Mammary epithelial cell (primary cell): ENCODE measurements at regions of chr17 and their contacts with region 1.

Region 1: DNA sequence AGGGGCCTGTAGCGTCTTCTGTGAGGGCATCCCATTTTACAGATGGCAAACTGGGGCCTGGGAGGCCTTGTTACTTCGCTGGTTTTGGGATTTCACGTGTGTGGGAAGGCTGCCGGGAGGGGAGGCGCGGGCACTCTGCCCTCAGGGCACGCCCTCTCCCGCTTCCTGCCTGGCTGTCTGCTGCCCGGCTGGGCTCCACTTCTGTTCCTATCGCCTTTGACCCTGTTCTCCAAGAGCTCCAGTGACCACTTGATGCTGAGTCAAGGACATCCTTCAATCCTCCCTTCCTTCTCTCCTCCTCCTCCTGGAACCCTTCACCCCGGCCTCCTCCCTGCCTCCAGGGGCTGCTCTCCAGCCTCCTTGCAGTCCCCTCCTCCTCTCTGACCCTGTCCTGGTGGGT is 16.0 kb downstream of the SPNS3 start:
- DNase-seq: no peak
- H3K4me3 ChIP-seq: no peak overlapping the region
- H3K27ac ChIP-seq: no peak overlapping the region
- H3K4me1 ChIP-seq: no peaks in the 10 kb centered on the region
- H3K27me3 ChIP-seq: no peaks in the 10 kb centered on the region
- CTCF ChIP-seq: no peak

Region 2: DNA sequence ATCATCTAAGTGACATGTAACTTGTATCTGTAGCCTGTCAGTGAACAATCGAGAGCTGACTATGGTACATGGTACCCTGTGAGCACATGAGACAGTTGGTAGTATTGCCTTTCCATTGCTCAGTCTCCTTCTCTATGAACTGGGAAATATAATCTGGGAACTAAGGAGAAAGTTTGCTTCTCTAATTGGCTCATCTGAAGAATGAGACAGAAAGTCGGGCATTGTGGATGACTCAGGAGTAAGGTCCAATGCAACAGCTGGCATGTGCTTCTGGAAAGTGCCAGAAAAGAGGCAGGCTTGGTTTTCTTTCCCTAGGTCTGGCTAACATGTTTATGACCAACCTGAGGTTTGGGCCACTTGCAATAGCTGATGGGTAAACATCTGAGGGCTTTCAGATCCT is 358.8 kb before region 1 on chr17:
- CTCF ChIA-PET with region 1: no interaction called
- dilution Hi-C with region 1: loop called (anchors 5 kb)
- in situ Hi-C with region 1: no loop called
- intact Hi-C with region 1: no loop called
- DNase-seq: no peak
- H3K4me3 ChIP-seq: no peak overlapping the region
- H3K27ac ChIP-seq: no peak overlapping the region
- H3K4me1 ChIP-seq: no peaks in the 10 kb centered on the region
- H3K27me3 ChIP-seq: no peaks in the 10 kb centered on the region
- CTCF ChIP-seq: no peak

Region 3: DNA sequence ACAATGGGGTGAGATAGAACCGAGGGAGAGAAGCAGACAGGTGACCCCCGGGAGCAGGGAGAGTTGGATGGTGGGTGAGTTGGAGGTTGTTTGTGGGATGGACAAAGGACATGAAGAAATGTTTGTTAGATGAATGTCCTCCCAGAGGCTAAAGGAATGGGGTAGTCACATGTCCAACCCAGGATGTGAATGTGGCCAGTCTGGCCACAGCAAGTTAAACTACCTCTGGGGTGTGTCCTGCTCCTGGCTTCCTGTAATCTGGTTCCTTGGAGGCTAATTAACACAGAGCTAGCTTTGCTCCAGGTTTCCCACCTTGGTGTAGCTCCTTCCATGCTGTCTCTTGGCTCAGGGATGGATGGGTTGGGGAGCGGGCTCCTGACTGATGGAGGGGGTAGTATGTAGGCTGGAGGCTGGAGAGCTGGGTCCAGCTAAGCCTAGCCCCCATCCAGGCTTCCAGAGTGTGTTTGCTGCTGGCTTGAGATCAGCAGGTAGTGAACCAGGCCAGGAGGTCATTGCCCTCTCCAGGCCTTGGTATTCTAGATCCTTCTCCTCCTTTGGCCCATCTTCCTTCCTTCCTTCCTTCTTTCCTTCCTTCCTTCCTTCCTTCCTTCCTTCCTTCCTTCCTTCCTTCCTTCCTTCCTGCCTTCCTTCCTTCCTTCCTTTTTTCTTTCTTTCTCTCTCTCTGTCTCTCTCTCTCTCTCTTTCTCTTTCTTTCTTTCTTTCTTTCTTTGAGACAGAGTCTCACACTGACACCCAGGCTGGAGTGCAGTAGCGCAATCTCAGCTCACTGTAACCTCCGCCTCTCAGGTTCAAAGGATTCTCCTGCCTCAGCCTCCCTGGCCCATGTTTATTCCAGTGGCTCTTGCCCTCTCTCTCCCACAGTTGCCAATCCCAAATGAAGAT is 55.3 kb before region 1 on chr17:
- CTCF ChIA-PET with region 1: no interaction called
- dilution Hi-C with region 1: no loop called
- in situ Hi-C with region 1: no loop called
- intact Hi-C with region 1: no loop called
- DNase-seq: peak; percentile 90
- H3K4me3 ChIP-seq: peak overlapping the region; percentile 7 to 32 (median 20)
- H3K27ac ChIP-seq: peak overlapping the region; percentile 80
- H3K4me1 ChIP-seq: peaks cover 32% of the 10 kb centered on the region
- H3K27me3 ChIP-seq: no peaks in the 10 kb centered on the region
- CTCF ChIP-seq: no peak

Region 4: DNA sequence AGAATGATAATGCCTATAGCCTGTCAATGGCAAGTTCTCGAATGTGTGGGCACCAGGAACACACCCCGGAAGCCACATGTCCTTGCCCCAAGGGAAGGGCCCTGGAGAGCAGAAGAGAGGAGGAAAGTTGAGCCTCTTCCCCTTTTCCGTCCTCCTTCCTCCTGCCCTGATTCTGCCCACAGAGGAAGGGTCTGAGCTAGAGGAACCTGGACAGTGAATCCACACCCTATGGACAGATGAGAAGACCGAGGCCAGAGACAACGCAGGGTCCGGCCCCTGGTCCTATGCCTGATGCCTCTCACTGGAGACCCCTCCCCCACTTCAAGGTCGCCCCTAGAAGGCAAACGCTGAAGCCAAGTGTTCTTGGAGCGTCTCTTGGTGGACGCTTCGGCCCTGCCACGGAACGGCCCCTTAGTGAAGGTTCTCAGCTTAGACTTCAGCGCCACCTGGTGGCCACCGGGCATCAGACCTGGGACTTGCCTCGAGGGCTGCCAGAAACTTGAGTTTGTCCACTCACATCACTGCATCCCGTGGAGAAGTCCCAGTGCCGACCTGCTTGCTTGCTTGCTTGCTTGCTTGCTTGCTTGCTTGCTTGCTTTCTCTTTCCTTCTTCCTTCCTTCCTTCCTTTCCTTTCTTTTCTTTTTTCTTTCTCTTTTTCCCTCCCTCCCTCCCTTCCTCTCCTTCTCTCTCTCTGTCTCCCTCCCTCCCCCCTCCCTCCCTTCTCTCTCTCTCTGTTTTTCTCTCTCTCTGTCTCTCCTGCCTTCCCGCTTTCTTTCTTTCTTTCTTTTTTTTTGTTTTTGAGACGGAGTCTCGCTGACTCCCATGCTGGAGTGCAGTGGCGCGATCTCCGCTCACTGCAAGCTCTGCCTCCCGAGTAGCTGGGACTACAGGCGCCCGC is 36.6 kb before region 1 on chr17:
- CTCF ChIA-PET with region 1: no interaction called
- dilution Hi-C with region 1: no loop called
- in situ Hi-C with region 1: no loop called
- intact Hi-C with region 1: no loop called
- DNase-seq: peak; percentile 71
- H3K4me3 ChIP-seq: no peak overlapping the region
- H3K27ac ChIP-seq: no peak overlapping the region
- H3K4me1 ChIP-seq: peaks cover 6% of the 10 kb centered on the region
- H3K27me3 ChIP-seq: no peaks in the 10 kb centered on the region
- CTCF ChIP-seq: peak; percentile 91 to 92

Region 5: GRCh38 chr17:4492721-4493561 is 43.2 kb after region 1 on chr17:
- CTCF ChIA-PET with region 1: no interaction called
- dilution Hi-C with region 1: loop called (anchors 5 kb)
- in situ Hi-C with region 1: no loop called
- intact Hi-C with region 1: no loop called
- DNase-seq: peak; percentile 32
- H3K4me3 ChIP-seq: no peak overlapping the region
- H3K27ac ChIP-seq: no peak overlapping the region
- H3K4me1 ChIP-seq: peaks cover 6% of the 10 kb centered on the region
- H3K27me3 ChIP-seq: peaks cover 3% of the 10 kb centered on the region
- CTCF ChIP-seq: no peak

Region 6: DNA sequence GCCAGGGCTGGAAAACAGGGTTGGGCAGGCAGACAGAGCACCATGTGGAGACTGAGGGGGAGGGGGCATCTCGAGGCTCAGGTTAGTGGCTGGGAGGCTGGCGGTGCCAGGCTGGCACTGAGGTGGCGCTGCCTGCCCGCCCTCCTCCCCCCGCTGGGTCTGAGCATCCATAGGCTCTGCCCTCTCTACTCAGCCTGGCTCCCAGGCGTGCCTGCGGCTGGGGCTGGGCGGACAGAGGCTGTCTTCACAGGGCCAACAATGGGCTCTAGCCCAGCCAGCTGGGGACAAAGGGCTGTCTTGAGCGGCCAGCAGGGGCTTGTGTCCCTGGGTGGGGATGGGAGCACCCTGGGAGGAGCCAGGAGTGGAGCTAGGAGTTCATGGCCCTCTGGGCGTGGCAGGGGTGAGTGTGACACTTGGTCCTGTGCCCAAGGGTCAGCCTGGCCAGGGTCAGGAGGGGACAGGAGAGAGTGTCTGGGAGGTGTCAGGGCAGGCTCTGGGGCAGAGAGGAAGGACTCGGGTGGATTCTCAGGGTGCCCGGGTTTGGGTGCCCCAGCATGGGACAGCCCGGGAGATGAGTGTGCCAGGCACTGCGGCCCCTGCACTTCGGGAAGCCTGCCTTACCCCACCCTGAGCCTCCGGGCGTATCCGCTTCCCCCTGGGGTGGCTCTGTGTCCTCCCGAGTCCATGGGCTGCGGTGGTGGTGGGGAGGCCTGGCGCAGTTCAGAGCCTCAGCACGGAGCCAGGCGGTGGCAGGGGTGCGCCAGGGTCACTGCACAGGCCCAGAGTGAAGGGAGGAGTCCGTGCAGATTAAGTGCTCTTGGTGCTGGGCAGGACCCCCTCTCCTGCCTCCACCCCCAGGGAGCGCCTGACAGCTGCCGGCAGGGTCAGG is 84.5 kb after region 1 on chr17:
- CTCF ChIA-PET with region 1: no interaction called
- dilution Hi-C with region 1: no loop called
- in situ Hi-C with region 1: no loop called
- intact Hi-C with region 1: no loop called
- DNase-seq: no peak
- H3K4me3 ChIP-seq: no peak overlapping the region
- H3K27ac ChIP-seq: no peak overlapping the region
- H3K4me1 ChIP-seq: peaks cover 5% of the 10 kb centered on the region
- H3K27me3 ChIP-seq: no peaks in the 10 kb centered on the region
- CTCF ChIP-seq: no peak

Region 7: DNA sequence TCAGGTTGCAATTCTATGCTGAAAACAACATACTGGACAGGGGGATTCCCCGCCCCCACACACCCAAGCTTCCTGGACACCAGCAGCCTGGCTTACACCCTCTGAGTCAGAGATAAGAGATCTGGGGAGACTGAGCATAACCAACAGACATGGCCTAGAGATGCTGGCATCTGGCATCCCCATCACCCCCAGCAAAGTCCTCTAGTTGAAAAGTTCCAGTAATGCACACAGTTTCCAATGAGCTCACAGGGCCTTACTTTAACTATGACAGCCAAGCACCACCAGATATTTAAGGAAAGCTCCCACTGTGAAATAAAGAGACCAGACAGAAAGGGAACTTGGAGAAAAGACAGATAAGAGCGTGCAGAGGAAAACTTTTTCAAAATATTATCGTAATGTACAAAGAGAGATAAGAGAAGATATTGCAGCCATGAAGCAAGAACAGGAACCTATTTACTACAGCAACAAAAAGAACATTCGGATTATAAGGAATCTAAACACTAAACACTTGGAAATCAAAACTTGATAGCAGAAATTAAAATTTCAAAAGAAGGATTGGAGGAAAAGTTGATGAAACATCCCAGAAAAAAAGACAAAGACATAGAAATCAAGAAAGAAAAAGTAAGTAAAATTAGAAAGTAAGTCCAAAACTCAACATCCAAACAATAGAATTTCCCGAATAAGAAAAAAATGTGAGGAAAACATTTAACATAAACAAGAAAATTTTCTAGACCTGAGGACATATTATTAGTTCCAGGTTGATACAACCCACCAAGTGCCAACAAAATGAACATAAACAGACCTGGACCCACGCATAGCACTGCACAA is 209.0 kb after region 1 on chr17:
- CTCF ChIA-PET with region 1: no interaction called
- dilution Hi-C with region 1: loop called (anchors 5 kb)
- in situ Hi-C with region 1: no loop called
- intact Hi-C with region 1: no loop called
- DNase-seq: peak; percentile 56
- H3K4me3 ChIP-seq: no peak overlapping the region
- H3K27ac ChIP-seq: no peak overlapping the region
- H3K4me1 ChIP-seq: no peaks in the 10 kb centered on the region
- H3K27me3 ChIP-seq: no peaks in the 10 kb centered on the region
- CTCF ChIP-seq: no peak